OCI-LY7 (cell line): ENCODE measurements at regions of chr12 and their contacts with region 1.

Region 1: DNA sequence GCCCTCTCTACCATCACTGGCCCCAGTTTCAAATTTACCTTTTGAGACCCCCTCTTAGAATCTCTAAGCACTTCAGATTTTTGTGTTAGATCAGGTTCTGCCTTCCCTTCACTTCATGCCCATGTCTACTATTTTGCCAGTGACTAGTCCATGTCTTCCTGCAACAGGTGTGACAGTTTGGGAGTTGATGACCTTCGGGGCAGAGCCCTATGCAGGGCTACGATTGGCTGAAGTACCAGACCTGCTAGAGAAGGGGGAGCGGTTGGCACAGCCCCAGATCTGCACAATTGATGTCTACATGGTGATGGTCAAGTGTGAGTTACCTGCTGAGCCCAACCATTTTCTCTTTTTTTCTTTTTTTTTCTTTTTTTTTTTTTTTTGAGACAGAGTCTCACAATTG is 5.8 kb upstream of the PA2G4 start:
- DNase-seq: no peak
- H3K4me3 ChIP-seq: no peak overlapping the region
- H3K27ac ChIP-seq: no peak overlapping the region
- H3K4me1 ChIP-seq: peaks cover 10% of the 10 kb centered on the region
- CTCF ChIP-seq: no peak

Region 2: GRCh38 chr12:56062996-56063395 is 35.6 kb before region 1 on chr12:
- CTCF ChIA-PET with region 1: no interaction called
- POLR2A ChIA-PET with region 1: no interaction called
- intact Hi-C with region 1: loop called (anchors 5 kb)
- DNase-seq: no peak
- H3K4me3 ChIP-seq: no peak overlapping the region
- H3K27ac ChIP-seq: no peak overlapping the region
- H3K4me1 ChIP-seq: no peaks in the 10 kb centered on the region
- CTCF ChIP-seq: no peak